ENCODE measurements at regions of chr10 and their contacts with region 1.

Region 1: DNA sequence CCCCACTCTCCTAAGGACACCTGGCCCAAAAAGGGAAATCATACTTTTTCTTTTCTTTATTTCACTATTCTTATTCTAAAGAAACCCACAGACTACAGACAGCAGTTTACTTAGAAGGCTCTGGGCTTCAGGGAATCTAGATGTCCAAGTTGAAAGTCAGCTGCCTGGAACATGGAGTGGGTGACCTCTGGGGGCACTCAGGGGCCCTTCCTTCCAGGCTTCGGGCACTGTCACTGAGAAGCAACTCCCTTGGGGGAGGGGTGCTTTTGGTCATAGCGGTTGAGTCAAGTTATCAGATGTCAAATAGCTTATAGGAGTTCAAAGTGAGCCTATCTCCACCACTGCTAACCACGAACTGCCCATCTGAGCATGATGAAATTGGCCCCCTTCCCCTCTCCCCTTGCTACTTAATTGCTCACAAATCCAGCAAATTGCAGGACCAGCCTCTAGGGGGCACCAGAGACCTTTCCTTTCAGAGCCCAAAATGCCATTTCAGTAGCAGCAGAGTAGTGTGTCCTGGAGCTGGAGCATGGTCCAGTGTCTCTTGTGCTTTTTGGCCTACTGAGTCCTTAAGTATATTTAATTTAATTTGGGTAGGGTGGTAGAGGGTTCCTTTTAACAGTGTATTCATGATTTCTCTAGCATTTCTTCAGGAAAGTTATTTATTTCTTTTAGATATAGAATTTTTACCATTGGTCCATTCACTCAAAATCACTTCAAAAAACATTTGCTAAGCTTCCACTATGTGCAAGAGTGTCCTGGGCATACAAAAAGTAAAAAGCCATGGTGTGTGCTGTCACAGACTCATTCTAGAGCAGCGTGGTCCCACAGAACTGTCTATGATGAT is 463.8 kb downstream of the KCNMA1 start:
- DNase-seq: peak; percentile 44 to 84 (median 71)
- ATAC-seq: peak; percentile 42
- H3K4me3 ChIP-seq: no peak overlapping the region
- H3K4me3 Mint-ChIP-seq: no peak overlapping the region
- H3K27ac ChIP-seq: no peak overlapping the region
- H3K27ac Mint-ChIP-seq: no peak overlapping the region
- H3K4me1 ChIP-seq: no peaks in the 10 kb centered on the region
- H3K4me1 Mint-ChIP-seq: no peaks in the 10 kb centered on the region
- H3K27me3 ChIP-seq: no peaks in the 10 kb centered on the region
- H3K27me3 Mint-ChIP-seq: peaks cover 10% of the 10 kb centered on the region
- CTCF ChIP-seq: peak; percentile 90

Region 2: GRCh38 chr10:77104459-77104980 is 69.3 kb before region 1 on chr10:
- CTCF ChIA-PET with region 1: no interaction called
- POLR2A ChIA-PET with region 1: no interaction called
- intact Hi-C with region 1: no loop called
- DNase-seq: no peak
- ATAC-seq: no peak
- H3K4me3 ChIP-seq: no peak overlapping the region
- H3K4me3 Mint-ChIP-seq: no peak overlapping the region
- H3K27ac ChIP-seq: no peak overlapping the region
- H3K27ac Mint-ChIP-seq: no peak overlapping the region
- H3K4me1 ChIP-seq: no peaks in the 10 kb centered on the region
- H3K4me1 Mint-ChIP-seq: no peaks in the 10 kb centered on the region
- H3K27me3 ChIP-seq: no peaks in the 10 kb centered on the region
- H3K27me3 Mint-ChIP-seq: peaks cover 5% of the 10 kb centered on the region
- CTCF ChIP-seq: no peak

Region 3: GRCh38 chr10:77159538-77160110 is 14.2 kb before region 1 on chr10:
- CTCF ChIA-PET with region 1: interaction called, 54 read pairs
- POLR2A ChIA-PET with region 1: no interaction called
- intact Hi-C with region 1: no loop called
- DNase-seq: no peak
- ATAC-seq: no peak
- H3K4me3 ChIP-seq: no peak overlapping the region
- H3K4me3 Mint-ChIP-seq: no peak overlapping the region
- H3K27ac ChIP-seq: no peak overlapping the region
- H3K27ac Mint-ChIP-seq: no peak overlapping the region
- H3K4me1 ChIP-seq: no peaks in the 10 kb centered on the region
- H3K4me1 Mint-ChIP-seq: no peaks in the 10 kb centered on the region
- H3K27me3 ChIP-seq: peaks cover 0 to 2% of the 10 kb centered on the region in 2 experiments
- H3K27me3 Mint-ChIP-seq: peaks cover 7% of the 10 kb centered on the region
- CTCF ChIP-seq: no peak

Region 4: DNA sequence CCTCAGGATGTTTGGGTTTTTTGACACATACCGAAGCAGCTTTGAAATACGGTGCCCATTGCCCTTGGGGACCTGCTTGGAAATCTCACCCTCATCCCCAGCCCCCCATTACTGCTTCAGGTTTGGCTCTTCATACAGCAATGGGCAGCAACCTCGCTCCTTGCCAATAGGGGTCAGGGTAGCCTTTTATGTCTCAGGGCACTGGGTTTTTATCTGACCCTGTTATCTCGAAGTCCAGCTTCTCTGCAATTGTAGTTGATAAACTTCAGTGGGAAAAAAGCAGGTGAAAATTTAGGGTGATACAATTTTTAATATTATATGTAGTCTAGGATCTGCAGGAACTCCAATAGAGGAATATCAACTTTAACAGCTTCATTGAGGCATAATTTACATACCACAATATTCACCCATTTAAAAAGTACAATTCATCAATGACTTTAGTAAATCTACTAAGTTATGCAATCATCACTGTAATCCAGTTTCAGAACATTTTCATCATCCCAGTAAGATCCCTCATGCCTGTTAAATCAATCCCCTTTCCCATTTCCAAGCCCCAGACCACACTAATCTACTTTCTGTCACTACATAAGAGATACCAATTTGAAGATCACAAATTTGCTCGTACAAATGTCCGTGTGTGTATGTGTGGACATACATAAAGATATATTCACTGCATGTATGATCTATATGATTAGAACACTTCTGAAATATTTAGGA is 77.6 kb after region 1 on chr10:
- CTCF ChIA-PET with region 1: interaction called, 30 read pairs
- POLR2A ChIA-PET with region 1: no interaction called
- intact Hi-C with region 1: loop called (anchors 5 kb)
- DNase-seq: peak in 5 of 9 experiments; percentile 4 to 64 (median 55)
- ATAC-seq: no peak
- H3K4me3 ChIP-seq: no peak overlapping the region
- H3K4me3 Mint-ChIP-seq: no peak overlapping the region
- H3K27ac ChIP-seq: no peak overlapping the region
- H3K27ac Mint-ChIP-seq: no peak overlapping the region
- H3K4me1 ChIP-seq: peaks cover 21% of the 10 kb centered on the region
- H3K4me1 Mint-ChIP-seq: peaks cover 23% of the 10 kb centered on the region
- H3K27me3 ChIP-seq: no peaks in the 10 kb centered on the region
- H3K27me3 Mint-ChIP-seq: no peaks in the 10 kb centered on the region
- CTCF ChIP-seq: peak; percentile 40

Region 5: DNA sequence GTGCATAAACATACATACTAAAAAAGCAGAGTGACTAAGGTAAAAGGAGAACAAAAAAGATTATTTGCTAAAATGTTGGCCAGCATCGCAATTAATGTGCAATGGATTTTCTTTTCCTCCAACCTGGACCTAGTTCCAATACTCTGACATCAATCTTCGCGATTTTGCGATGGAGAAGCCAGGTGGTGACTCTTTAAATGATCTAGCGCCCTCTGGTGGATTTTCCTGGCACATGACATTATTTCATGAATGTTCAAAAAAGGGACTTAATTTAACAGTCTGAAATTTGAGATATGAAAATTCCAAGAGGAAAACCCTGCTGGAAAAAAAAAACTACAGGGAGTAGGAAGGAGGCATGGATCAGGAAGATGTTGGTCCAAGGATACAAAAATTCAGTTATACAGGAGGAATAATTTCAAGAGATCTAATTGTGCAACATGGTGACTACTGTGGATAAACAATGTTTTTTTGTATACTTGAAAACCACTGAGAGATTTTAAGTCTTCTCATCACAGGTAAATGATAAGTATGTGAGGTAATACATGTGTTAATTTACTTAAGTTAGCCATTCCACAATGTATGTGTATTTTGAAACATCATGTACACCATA is 468.1 kb after region 1 on chr10:
- CTCF ChIA-PET with region 1: interaction called, 394 read pairs
- POLR2A ChIA-PET with region 1: no interaction called
- intact Hi-C with region 1: loop called (anchors 1 kb)
- DNase-seq: peak in 8 of 9 experiments; percentile 23 to 72 (median 64)
- ATAC-seq: no peak
- H3K4me3 ChIP-seq: no peak overlapping the region
- H3K4me3 Mint-ChIP-seq: no peak overlapping the region
- H3K27ac ChIP-seq: no peak overlapping the region
- H3K27ac Mint-ChIP-seq: no peak overlapping the region
- H3K4me1 ChIP-seq: no peaks in the 10 kb centered on the region
- H3K4me1 Mint-ChIP-seq: peaks cover 11% of the 10 kb centered on the region
- H3K27me3 ChIP-seq: peaks cover 2 to 3% of the 10 kb centered on the region in 2 experiments
- H3K27me3 Mint-ChIP-seq: peaks cover 34% of the 10 kb centered on the region
- CTCF ChIP-seq: peak; percentile 85

Region 6: GRCh38 chr10:77837240-77837924 is 663.5 kb after region 1 on chr10:
- CTCF ChIA-PET with region 1: interaction called, 4 read pairs
- POLR2A ChIA-PET with region 1: no interaction called
- intact Hi-C with region 1: loop called (anchors 5 kb)
- DNase-seq: peak; percentile 30 to 85 (median 62)
- ATAC-seq: peak; percentile 55
- H3K4me3 ChIP-seq: no peak overlapping the region
- H3K4me3 Mint-ChIP-seq: no peak overlapping the region
- H3K27ac ChIP-seq: peak overlapping the region in 1 of 2 experiments; percentile 87
- H3K27ac Mint-ChIP-seq: peak overlapping the region; percentile 84
- H3K4me1 ChIP-seq: peaks cover 10% of the 10 kb centered on the region
- H3K4me1 Mint-ChIP-seq: peaks cover 20% of the 10 kb centered on the region
- H3K27me3 ChIP-seq: no peaks in the 10 kb centered on the region
- H3K27me3 Mint-ChIP-seq: no peaks in the 10 kb centered on the region
- CTCF ChIP-seq: no peak